Cardiac septum (tissue), 1 donor: ENCODE measurements at regions of chr11 and their contacts with region 1.

Region 1: GRCh38 chr11:33362051-33362910 is 105.1 kb downstream of the HIPK3 start:
- DNase-seq: no peak

Region 2: DNA sequence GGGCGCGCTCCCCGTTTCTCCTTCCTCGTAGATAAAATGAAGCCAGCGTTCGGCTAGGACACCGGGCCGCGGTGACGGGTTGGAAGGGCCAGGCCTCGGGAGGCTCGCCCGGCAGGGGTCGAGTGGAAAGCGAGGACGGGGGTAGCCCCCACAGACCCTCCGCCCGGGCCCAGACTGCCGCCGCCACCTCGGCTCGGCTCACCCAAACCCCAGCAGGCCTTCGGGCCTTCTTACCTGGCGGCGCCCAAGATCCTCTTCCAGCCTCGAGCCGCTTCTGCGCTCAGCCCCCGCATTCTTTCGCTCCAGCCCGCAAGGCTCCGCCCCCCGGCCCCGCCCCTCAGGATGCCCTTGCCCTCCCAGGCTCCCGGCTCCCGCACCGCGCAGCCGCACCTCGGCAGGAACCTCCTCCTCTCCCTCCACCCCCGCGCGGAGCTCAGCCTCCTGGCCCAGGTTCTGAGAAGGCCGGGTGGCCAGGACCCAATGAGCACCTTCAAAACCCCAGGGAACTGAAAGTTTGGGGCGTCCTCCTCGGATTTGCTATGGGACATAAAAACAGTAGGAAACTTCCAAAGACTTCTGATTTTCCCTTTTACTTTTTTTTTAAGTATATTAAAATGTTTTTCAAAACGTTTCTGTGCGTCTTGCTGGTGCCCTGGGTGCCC is 374.0 kb after region 1 on chr11 and contains the start of gene CD59:
- intact Hi-C with region 1: loop called (anchors 5 kb)
- DNase-seq: peak; percentile 99
- total RNA-seq, gene CD59: 932 TPM